Esophagus muscularis mucosa (tissue), 4 donors: ENCODE measurements at regions of chr20 and their contacts with region 1.

Region 1: GRCh38 chr20:35207950-35208611 is 18.4 kb upstream of the MMP24 start:
- DNase-seq: no peak
- H3K4me3 ChIP-seq: peak overlapping the region; percentile 25 to 44 (median 34)
- H3K27ac ChIP-seq: peak overlapping the region; percentile 75 to 79 (median 78)
- H3K4me1 ChIP-seq: peaks cover 9 to 18% (median 15%) of the 10 kb centered on the region in 4 donors
- H3K27me3 ChIP-seq: no peaks in the 10 kb centered on the region
- CTCF ChIP-seq: peak; percentile 74 to 87 (median 75)
- EP300 ChIP-seq: no peak
- POLR2A ChIP-seq: no peak

Region 2: GRCh38 chr20:35092524-35093266 is 115.4 kb before region 1 on chr20 and contains the start of gene TRPC4AP:
- intact Hi-C with region 1: loop called (anchors 5 kb)
- DNase-seq: peak; percentile 96
- H3K4me3 ChIP-seq: peak within 1 kb of the TSS; percentile 91 to 99 (median 96)
- H3K27ac ChIP-seq: peak within 1 kb of the TSS; percentile 93 to 97 (median 95)
- H3K4me1 ChIP-seq: peaks cover 41 to 58% (median 51%) of the 10 kb centered on the region in 4 donors
- H3K27me3 ChIP-seq: no peaks in the 10 kb centered on the region
- CTCF ChIP-seq: peak; percentile 96 to 98 (median 97)
- EP300 ChIP-seq: no peak
- POLR2A ChIP-seq: peak; percentile 26
- total RNA-seq, gene TRPC4AP: 44.1 to 58.2 (median 52.1) TPM

Region 3: GRCh38 chr20:35146920-35147574 is 61.0 kb before region 1 on chr20 and contains the start of gene EDEM2:
- intact Hi-C with region 1: loop called (anchors 2 kb)
- DNase-seq: peak; percentile 98
- H3K4me3 ChIP-seq: peak within 1 kb of the TSS; percentile 70 to 83 (median 79)
- H3K27ac ChIP-seq: peak within 1 kb of the TSS; percentile 72 to 87 (median 78)
- H3K4me1 ChIP-seq: peaks cover 12 to 32% (median 30%) of the 10 kb centered on the region in 4 donors
- H3K27me3 ChIP-seq: no peaks in the 10 kb centered on the region
- CTCF ChIP-seq: no peak
- EP300 ChIP-seq: no peak
- POLR2A ChIP-seq: no peak
- total RNA-seq, gene EDEM2: 13.3 to 20.3 (median 14.6) TPM

Region 4: GRCh38 chr20:35269055-35269781 is 61.1 kb after region 1 on chr20:
- intact Hi-C with region 1: loop called (anchors 5 kb)
- DNase-seq: no peak
- H3K4me3 ChIP-seq: no peak overlapping the region
- H3K27ac ChIP-seq: peak overlapping the region in 1 of 4 donors; percentile 16
- H3K4me1 ChIP-seq: peaks cover under 1 to 28% (median 17%) of the 10 kb centered on the region in 4 donors
- H3K27me3 ChIP-seq: no peaks in the 10 kb centered on the region
- CTCF ChIP-seq: peak; percentile 64 to 85 (median 67)
- EP300 ChIP-seq: no peak
- POLR2A ChIP-seq: no peak

Region 5: DNA sequence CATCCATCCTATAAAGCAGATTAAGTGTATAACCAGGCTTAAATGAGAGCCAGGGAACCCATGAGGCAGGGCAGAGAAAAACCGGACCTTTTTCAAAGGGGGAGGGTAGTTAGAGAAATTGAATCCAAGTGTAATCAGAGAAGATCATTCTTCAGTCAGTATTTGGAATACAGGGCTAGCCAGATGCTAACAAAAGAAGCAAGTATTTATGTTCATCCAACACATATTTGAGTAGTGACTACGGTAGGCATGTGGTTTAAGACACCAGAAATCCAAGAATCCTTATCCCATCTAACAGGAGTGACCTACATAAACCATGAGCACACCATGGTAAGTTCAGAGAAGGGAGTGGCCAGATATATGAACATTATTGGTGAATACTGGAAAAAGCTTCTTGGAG is 130.9 kb after region 1 on chr20:
- intact Hi-C with region 1: no loop called
- DNase-seq: no peak
- H3K4me3 ChIP-seq: no peak overlapping the region
- H3K27ac ChIP-seq: peak overlapping the region; percentile 16 to 63 (median 50)
- H3K4me1 ChIP-seq: peaks cover 4 to 53% (median 48%) of the 10 kb centered on the region in 4 donors
- H3K27me3 ChIP-seq: no peaks in the 10 kb centered on the region
- CTCF ChIP-seq: no peak
- EP300 ChIP-seq: no peak
- POLR2A ChIP-seq: no peak